ENCODE measurements at regions of chr11 and their contacts with region 1.

Region 1: DNA sequence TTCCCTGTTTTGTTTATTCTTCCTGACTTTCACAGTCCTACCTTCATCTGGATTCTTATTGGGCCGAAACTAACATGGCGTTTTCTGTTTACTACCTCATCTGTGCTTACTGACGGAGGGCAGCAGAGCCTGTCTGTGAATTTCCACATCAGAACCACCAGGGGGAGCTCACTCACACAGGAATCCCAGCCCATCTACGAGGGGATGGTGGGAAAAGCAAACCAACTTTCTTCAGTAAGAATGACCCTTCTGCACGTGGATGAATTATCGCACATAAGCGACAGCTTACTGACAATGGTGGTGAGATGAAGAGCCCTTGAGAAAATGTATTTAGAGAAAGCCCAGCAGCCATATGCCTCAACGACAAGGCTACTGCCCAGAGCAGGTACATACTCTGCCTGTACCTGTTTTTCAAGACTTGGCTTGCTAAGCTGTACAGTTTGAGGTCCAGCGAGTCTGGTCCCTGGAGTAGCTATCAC is 42.5 kb downstream of the LARGE2 start:
- DNase-seq: peak; percentile 82

Region 2: DNA sequence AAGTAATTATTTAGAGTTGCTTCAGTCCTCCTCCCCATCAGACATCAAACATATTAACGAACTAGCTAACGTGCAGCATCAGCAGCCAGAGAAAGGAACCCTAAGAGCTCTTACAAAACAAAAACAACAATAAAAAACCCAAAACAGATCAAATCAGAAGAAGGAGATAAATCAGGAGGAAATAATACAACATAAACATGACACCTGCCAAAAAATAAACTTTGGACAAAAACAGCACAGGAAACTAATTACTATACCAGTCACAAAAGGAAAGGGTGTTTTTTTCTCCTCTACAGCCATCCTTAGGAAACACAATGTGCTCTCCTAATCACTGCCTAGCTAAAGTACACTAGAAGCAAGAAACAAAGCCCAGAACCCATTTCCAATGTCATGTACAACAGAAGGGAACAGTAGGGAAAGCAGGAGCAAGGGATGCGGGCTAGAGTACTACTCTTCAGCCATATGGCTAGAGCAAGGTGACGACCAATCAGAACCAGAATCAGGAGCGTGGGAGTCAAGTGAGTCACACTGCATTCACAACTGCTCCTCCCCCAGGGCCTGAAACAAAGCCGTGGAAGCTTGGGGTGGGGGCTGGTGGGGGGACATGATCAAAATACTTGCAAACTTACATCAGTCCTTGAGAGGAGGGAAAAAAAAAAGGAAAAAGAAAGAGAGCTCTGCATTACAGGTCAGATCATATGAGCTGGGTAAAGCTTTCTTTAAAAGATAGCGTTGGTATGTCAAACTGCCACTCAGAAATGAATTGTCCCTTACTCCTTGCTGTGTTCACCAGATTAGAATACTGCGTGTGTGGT is 17.9 kb after region 1 on chr11:
- CTCF ChIA-PET with region 1: interaction called, 13 read pairs
- POLR2A ChIA-PET with region 1: interaction called, 7 read pairs
- DNase-seq: peak; percentile 65

Region 3: DNA sequence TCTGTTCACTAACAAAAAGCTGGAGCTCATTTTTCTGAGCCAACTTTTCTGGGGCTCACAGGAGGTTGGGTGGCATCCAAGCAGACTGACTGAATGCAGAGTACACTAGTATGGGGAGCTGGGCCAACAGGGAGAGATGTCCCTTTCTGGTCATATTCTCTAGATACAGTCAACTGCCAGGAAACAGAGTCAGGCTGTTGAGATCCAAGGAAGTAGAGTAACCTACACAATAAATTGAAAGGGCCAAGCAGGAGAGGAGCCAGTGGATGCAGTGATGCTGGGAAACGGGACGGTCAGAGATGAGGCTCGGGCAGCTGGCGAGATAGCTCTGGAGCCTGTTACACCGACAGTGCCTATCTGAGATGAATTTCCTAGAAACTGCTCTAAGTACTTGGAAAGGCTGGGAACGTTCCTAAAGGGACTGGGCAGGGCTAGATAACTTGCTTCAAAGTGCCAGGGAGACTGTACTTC is 28.6 kb after region 1 on chr11:
- CTCF ChIA-PET with region 1: interaction called, 25 read pairs
- POLR2A ChIA-PET with region 1: no interaction called
- DNase-seq: no peak

Region 4: GRCh38 chr11:46001448-46001914 is 36.5 kb after region 1 on chr11:
- CTCF ChIA-PET with region 1: interaction called, 34 read pairs
- POLR2A ChIA-PET with region 1: interaction called, 9 read pairs
- DNase-seq: no peak

Region 5: GRCh38 chr11:46006418-46007070 is 41.6 kb after region 1 on chr11:
- CTCF ChIA-PET with region 1: interaction called, 34 read pairs
- POLR2A ChIA-PET with region 1: interaction called, 9 read pairs
- DNase-seq: peak; percentile 67

Measured in HEK293T (cell line).